ENCODE measurements at regions of chr7 and their contacts with region 1.

Region 1: GRCh38 chr7:149799397-149800171 is 26.2 kb upstream of the ZNF467 start:
- DNase-seq: no peak
- H3K4me3 ChIP-seq: no peak overlapping the region
- H3K27ac ChIP-seq: no peak overlapping the region
- H3K4me1 ChIP-seq: no peaks in the 10 kb centered on the region
- H3K27me3 ChIP-seq: no peaks in the 10 kb centered on the region
- CTCF ChIP-seq: peak in 1 of 2 donors; percentile 50

Region 2: GRCh38 chr7:149748076-149748874 is 51.3 kb before region 1 on chr7:
- CTCF ChIA-PET with region 1: no interaction called
- dilution Hi-C with region 1: loop called (anchors 5 kb)
- in situ Hi-C with region 1: no loop called
- intact Hi-C with region 1: no loop called
- DNase-seq: no peak
- H3K4me3 ChIP-seq: no peak overlapping the region
- H3K27ac ChIP-seq: no peak overlapping the region
- H3K4me1 ChIP-seq: no peaks in the 10 kb centered on the region
- H3K27me3 ChIP-seq: no peaks in the 10 kb centered on the region
- CTCF ChIP-seq: no peak